ENCODE measurements at regions of chr2 and their contacts with region 1.

Region 1: GRCh38 chr2:84302513-84303412 is 156.3 kb downstream of the SUCLG1 start:
- DNase-seq: peak in 6 of 10 donors; percentile 20 to 85 (median 52)

Region 2: DNA sequence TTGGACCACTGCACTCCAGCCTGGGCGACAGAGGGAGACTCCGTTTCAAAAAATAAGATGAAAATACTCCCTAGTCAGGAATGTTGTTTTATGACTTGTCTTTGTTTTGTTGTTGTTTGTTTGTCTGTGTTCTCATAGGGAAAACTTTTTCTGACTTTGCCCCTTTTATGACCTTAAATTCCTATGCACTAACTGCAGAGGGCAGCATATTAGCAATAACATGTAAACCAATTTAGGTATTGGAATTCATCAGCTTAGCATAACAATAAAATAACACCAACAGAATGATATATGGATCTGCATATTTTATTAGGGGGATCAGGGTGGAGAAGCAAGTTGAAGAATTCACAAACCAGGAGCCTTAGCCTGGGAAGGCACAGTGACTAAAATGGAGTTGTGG is 475.1 kb before region 1 on chr2:
- intact Hi-C with region 1: loop called (anchors 10 kb)
- DNase-seq: no peak

Region 3: DNA sequence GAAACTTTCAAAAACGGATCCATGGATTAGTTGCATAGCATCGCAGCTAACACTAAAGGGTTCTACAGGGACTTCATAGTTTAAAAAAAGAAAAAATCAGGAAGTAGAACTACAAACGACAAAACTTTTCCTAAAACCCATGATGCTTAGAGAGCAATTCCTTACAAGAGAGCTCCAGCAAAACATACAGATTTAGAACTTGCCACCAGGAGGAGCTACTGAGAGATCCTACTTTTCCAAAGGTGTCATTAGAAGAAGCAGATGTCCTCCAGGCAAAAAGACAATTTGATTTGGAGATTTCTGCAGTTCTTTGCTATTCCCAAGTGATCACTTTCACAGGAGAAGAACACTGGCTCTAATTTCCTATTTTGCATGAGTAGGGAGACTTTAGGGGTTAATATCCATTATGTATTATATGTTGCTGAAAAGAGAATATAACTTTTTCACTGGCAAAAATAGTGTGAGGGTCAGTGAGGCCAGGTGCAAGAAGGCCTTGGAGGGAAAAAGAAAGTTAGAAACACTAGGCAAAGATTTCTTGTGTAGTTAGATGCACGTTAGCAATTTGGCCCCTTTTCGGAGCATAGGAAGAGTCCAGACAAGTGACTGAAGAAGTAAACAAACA is 279.8 kb before region 1 on chr2:
- intact Hi-C with region 1: loop called (anchors 5 kb)
- DNase-seq: no peak